Transverse colon (tissue), 4 donors: ENCODE measurements at regions of chr17 and their contacts with region 1.

Region 1: GRCh38 chr17:36629252-36629847 is 28.0 kb downstream of the MRM1 start:
- DNase-seq: peak; percentile 80
- H3K4me3 ChIP-seq: no peak overlapping the region
- H3K27ac ChIP-seq: no peak overlapping the region
- H3K4me1 ChIP-seq: no peaks in the 10 kb centered on the region
- H3K27me3 ChIP-seq: peaks cover 7% of the 10 kb centered on the region
- CTCF ChIP-seq: peak; percentile 97 to 99 (median 98)
- EP300 ChIP-seq: no peak
- POLR2A ChIP-seq: no peak

Region 2: GRCh38 chr17:36665417-36665816 is 36.1 kb after region 1 on chr17:
- in situ Hi-C with region 1: no loop called
- intact Hi-C with region 1: no loop called
- DNase-seq: no peak
- H3K4me3 ChIP-seq: no peak overlapping the region
- H3K27ac ChIP-seq: no peak overlapping the region
- H3K4me1 ChIP-seq: no peaks in the 10 kb centered on the region
- H3K27me3 ChIP-seq: no peaks in the 10 kb centered on the region
- CTCF ChIP-seq: no peak
- EP300 ChIP-seq: no peak
- POLR2A ChIP-seq: no peak

Region 3: DNA sequence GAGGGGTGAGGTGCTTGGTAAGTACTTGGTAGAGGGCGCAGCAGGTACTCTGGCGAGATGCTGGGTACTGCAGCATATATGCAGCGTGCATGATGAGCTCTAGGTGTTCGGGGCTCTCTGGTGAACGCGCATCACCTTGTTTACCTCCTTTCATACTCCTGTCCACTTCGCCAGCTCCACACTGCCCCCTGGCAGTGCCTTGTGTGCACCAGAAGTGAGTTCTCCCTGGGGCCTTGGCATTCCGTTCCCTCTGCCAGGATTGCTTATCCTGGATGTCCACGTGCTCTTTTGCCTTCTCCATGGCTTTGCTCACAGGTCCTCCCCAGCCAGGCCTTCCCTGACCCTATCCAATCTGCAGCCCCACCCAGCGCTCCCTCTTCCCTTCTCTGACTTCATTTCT is 126.2 kb after region 1 on chr17:
- in situ Hi-C with region 1: loop called in 1 of 4 experiments (anchors 10 kb)
- intact Hi-C with region 1: loop called (anchors 10 kb)
- DNase-seq: peak; percentile 67
- H3K4me3 ChIP-seq: no peak overlapping the region
- H3K27ac ChIP-seq: no peak overlapping the region
- H3K4me1 ChIP-seq: no peaks in the 10 kb centered on the region
- H3K27me3 ChIP-seq: peaks cover 5% of the 10 kb centered on the region
- CTCF ChIP-seq: peak; percentile 32 to 52 (median 44)
- EP300 ChIP-seq: no peak
- POLR2A ChIP-seq: no peak

Region 4: GRCh38 chr17:37047631-37048104 is 418.3 kb after region 1 on chr17:
- in situ Hi-C with region 1: loop called in 3 of 4 experiments (anchors 5 to 25 kb)
- intact Hi-C with region 1: loop called (anchors 5 kb)
- DNase-seq: peak; percentile 75
- H3K4me3 ChIP-seq: no peak overlapping the region
- H3K27ac ChIP-seq: no peak overlapping the region
- H3K4me1 ChIP-seq: peaks cover 0 to 3% (median 2%) of the 10 kb centered on the region in 4 donors
- H3K27me3 ChIP-seq: no peaks in the 10 kb centered on the region
- CTCF ChIP-seq: peak; percentile 81 to 88 (median 86)
- EP300 ChIP-seq: no peak
- POLR2A ChIP-seq: no peak

Region 5: DNA sequence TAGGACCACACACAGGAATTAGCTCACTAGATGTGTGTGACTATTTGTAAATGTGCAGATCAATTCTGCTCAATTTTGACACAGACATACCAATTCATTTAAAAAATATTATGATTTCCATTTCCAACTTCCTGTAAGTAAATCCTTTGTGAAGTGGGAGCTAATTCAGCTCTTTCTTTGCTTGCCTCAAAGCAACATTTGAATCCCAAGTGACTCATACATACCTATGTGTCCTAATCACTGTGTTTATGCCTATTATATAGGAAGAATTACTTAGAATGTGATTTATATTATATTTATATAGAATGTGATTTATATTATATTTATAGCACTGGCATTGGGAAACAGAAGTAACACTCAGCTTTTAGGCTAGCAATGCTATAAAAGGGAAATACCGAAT is 550.5 kb after region 1 on chr17:
- in situ Hi-C with region 1: loop called in 1 of 4 experiments (anchors 25 kb)
- intact Hi-C with region 1: no loop called
- DNase-seq: no peak
- H3K4me3 ChIP-seq: no peak overlapping the region
- H3K27ac ChIP-seq: no peak overlapping the region
- H3K4me1 ChIP-seq: no peaks in the 10 kb centered on the region
- H3K27me3 ChIP-seq: no peaks in the 10 kb centered on the region
- CTCF ChIP-seq: no peak
- EP300 ChIP-seq: no peak
- POLR2A ChIP-seq: no peak

Region 6: GRCh38 chr17:37239690-37240334 is 610.5 kb after region 1 on chr17:
- in situ Hi-C with region 1: loop called (anchors 10 to 25 kb)
- intact Hi-C with region 1: loop called (anchors 10 kb)
- DNase-seq: no peak
- H3K4me3 ChIP-seq: no peak overlapping the region
- H3K27ac ChIP-seq: no peak overlapping the region
- H3K4me1 ChIP-seq: no peaks in the 10 kb centered on the region
- H3K27me3 ChIP-seq: no peaks in the 10 kb centered on the region
- CTCF ChIP-seq: peak; percentile 35 to 52 (median 47)
- EP300 ChIP-seq: no peak
- POLR2A ChIP-seq: no peak